SK-N-SH (cell line): ENCODE measurements at regions of chr3 and their contacts with region 1.

Region 1: GRCh38 chr3:50350527-50351322 is at the starts of genes CYB561D2 and NPRL2:
- DNase-seq: peak; percentile 97
- H3K4me3 ChIP-seq: peak within 1 kb of the TSS; percentile 76 to 94
- H3K27ac ChIP-seq: peak within 1 kb of the TSS; percentile 83 to 98
- H3K4me1 ChIP-seq: peaks cover 11 to 59% of the 10 kb centered on the region in 2 experiments; a peak in 2 of 4 replicates
- H3K27me3 ChIP-seq: no peaks in the 10 kb centered on the region
- CTCF ChIP-seq: no peak
- EP300 ChIP-seq: no peak
- RAD21 ChIP-seq: no peak
- polyA plus RNA-seq, gene CYB561D2: 40.7 and 46.5 TPM in 2 replicates
- polyA plus RNA-seq, gene NPRL2: 43.6 and 56.2 TPM in 2 replicates

Region 2: DNA sequence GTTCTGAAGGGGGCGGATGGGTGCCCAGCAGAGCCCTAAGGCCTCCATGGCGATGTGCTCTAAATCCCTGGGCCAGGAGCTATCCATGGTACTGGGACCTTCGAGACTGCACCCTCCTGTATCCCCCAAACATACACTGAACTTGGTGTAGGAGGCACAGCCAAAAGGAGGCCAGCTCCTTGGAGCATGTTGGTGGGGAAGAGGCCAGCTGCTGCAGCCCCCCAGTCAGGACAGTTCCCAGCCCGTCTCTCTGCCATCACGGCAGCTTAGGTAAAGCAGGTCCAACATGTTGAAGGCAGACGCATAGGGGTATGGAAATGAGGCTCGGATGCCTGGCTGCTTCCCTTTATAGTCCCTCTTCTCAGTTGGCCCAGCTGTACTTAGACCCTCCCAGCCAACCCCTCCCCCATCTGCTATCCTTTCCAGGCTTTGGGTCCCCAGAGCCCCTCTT is 482.8 kb before region 1 on chr3:
- CTCF ChIA-PET with region 1: no interaction called
- POLR2A ChIA-PET with region 1: no interaction called
- DNase-seq: no peak
- H3K4me3 ChIP-seq: no peak overlapping the region
- H3K27ac ChIP-seq: no peak overlapping the region
- H3K4me1 ChIP-seq: peaks cover 0 to 35% of the 10 kb centered on the region in 2 experiments; a peak in 1 of 4 replicates
- H3K27me3 ChIP-seq: peaks cover 41% of the 10 kb centered on the region
- CTCF ChIP-seq: no peak
- EP300 ChIP-seq: no peak
- RAD21 ChIP-seq: no peak

Region 3: DNA sequence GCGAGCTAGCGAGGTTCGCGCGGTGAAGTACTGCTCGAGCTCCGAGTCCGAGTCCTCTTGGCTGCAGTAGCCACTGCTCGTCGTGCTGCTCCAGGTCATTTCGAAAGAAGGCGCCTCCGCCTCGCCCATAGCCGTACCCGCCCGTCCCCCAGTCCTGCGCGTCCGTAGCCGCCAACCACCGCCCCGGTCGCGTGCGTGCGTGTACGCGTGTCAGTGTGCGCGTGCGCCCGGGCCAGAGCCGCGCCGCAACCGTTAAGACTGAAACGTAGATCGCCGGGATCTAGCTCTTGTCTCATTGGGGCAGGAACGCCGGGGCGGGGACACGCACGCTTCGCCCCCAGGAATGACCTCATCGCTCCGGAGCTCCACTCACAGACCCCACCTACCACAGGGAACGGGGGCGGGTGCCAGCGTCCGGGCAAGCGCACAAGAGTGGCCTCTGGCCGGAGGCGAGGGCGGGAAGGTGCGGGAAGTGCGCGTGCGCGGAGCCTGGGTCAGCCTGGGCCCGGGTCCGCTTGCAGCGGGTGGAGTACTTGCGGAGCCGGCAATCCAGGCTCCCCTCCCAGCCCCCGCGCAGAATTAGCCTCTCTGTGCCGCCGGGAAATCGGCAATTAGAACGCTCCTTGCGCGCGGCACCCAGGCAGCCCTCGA is 13.4 kb before region 1 on chr3:
- CTCF ChIA-PET with region 1: interaction called, 40 read pairs
- POLR2A ChIA-PET with region 1: interaction called, 31 read pairs
- DNase-seq: peak; percentile 100
- H3K4me3 ChIP-seq: peak overlapping the region; percentile 77 to 79
- H3K27ac ChIP-seq: peak overlapping the region; percentile 82 to 98
- H3K4me1 ChIP-seq: peaks cover 10 to 33% of the 10 kb centered on the region in 2 experiments
- H3K27me3 ChIP-seq: no peaks in the 10 kb centered on the region
- CTCF ChIP-seq: no peak
- EP300 ChIP-seq: peak; percentile 13 to 41; a peak in 1 of 4 replicates
- RAD21 ChIP-seq: no peak

Region 4: DNA sequence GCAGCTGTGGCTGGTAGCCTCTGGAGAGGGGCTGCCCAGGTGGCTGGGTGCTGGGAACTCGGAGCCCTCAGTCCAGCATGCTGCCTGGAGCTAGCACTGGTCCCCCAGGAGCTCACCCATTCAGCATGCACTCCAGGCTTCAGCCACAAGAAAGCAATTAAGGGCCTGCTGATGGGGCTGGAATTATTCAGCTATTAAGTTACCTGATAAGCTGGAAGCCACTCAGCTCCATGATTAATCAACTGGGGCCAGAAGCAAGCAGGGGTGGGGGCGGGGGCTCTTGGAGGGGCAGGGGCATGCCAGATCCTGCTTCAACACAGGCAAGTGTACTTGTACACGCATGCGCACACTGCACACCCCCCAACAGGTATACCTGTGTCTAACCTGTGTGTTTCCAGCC is 30.7 kb after region 1 on chr3:
- CTCF ChIA-PET with region 1: interaction called, 42 read pairs
- POLR2A ChIA-PET with region 1: interaction called, 13 read pairs
- DNase-seq: peak; percentile 90
- H3K4me3 ChIP-seq: peak overlapping the region in 1 of 2 experiments; percentile 41; a peak in 1 of 4 replicates
- H3K27ac ChIP-seq: peak overlapping the region in 1 of 2 experiments; percentile 100; a peak in 2 of 4 replicates
- H3K4me1 ChIP-seq: peaks cover 0 to 98% of the 10 kb centered on the region in 2 experiments; a peak in 2 of 4 replicates
- H3K27me3 ChIP-seq: no peaks in the 10 kb centered on the region
- CTCF ChIP-seq: no peak
- EP300 ChIP-seq: peak in 1 of 2 experiments; percentile 97; a peak in 2 of 4 replicates
- RAD21 ChIP-seq: no peak; the same call in 1 of the 2 replicates

Region 5: GRCh38 chr3:50427984-50428633 is 77.4 kb after region 1 on chr3:
- CTCF ChIA-PET with region 1: interaction called, 57 read pairs
- POLR2A ChIA-PET with region 1: interaction called, 13 read pairs
- DNase-seq: peak; percentile 88
- H3K4me3 ChIP-seq: no peak overlapping the region; a peak in 1 of 4 replicates
- H3K27ac ChIP-seq: peak overlapping the region in 1 of 2 experiments; percentile 100; a peak in 2 of 4 replicates
- H3K4me1 ChIP-seq: peaks cover 0 to 92% of the 10 kb centered on the region in 2 experiments; a peak in 2 of 4 replicates
- H3K27me3 ChIP-seq: no peaks in the 10 kb centered on the region
- CTCF ChIP-seq: peak; percentile 36; the same call in 1 of the 2 replicates
- EP300 ChIP-seq: peak in 1 of 2 experiments; percentile 97; a peak in 2 of 4 replicates
- RAD21 ChIP-seq: peak; percentile 81

Region 6: GRCh38 chr3:50550079-50550741 is 199.5 kb after region 1 on chr3:
- CTCF ChIA-PET with region 1: interaction called, 47 read pairs
- POLR2A ChIA-PET with region 1: interaction called, 5 read pairs
- DNase-seq: peak; percentile 86
- H3K4me3 ChIP-seq: no peak overlapping the region; a peak in 1 of 4 replicates
- H3K27ac ChIP-seq: peak overlapping the region in 1 of 2 experiments; percentile 63; a peak in 2 of 4 replicates
- H3K4me1 ChIP-seq: peaks cover 0 to 45% of the 10 kb centered on the region in 2 experiments; a peak in 1 of 4 replicates
- H3K27me3 ChIP-seq: no peaks in the 10 kb centered on the region
- CTCF ChIP-seq: peak; percentile 64
- EP300 ChIP-seq: 0 out of 4 replicates have a peak, but pooled peaks of 1 of the 2 experiments have one; percentile 7
- RAD21 ChIP-seq: peak; percentile 80